CD4-positive, alpha-beta T cell (primary cell): ENCODE measurements at regions of chr11 and their contacts with region 1.

Region 1: DNA sequence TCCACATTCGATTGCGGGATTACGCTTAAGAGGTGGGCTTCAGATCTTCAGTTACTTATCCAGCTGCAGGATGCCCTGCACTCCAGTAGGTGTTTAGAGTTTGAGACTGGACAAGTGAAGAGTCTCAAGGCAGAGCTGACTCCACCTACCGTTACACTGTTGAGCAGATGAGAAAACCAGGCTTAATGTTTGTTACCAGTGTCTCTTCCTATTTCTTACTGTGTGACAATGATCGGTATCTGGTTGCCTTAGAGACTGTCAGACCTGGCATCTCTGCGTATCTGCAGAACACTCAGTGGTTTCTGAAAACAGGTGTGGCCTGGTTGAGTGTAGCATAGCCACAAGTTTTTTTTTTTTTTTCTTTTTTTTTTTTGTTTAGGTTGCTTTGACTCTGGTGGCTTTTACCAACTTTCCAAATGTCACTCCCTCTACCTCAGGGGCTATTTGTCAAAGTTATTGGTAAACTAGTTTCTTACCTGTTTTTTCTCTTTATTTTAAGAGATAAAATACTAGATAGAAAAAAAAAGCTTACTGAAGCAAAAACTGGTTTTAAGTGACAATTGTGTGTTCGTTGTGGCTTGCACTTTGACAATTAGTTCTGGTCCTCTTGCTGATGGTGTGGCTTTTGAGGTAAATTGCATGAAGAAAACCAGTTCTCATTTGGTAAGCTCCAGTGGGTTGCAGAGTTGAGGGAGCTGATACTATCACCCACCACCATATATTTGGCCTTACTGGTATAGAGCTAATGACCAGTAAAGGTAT is 284.8 kb downstream of the ETS1 start:
- DNase-seq: peak; percentile 49 to 97 (median 65)
- ATAC-seq: peak; percentile 85
- H3K4me3 ChIP-seq: peak overlapping the region; percentile 65
- H3K4me3 Mint-ChIP-seq: peak overlapping the region; percentile 94
- H3K27ac ChIP-seq: peak overlapping the region; percentile 90 to 94
- H3K27ac Mint-ChIP-seq: peak overlapping the region; percentile 100
- H3K4me1 ChIP-seq: peaks cover 82% of the 10 kb centered on the region
- H3K4me1 Mint-ChIP-seq: peaks cover 98% of the 10 kb centered on the region
- H3K27me3 ChIP-seq: no peaks in the 10 kb centered on the region
- H3K27me3 Mint-ChIP-seq: no peaks in the 10 kb centered on the region
- CTCF ChIP-seq: peak; percentile 46

Region 2: GRCh38 chr11:128279866-128280265 is 22.7 kb before region 1 on chr11:
- CTCF ChIA-PET with region 1: no interaction called
- POLR2A ChIA-PET with region 1: no interaction called
- intact Hi-C with region 1: no loop called
- DNase-seq: no peak
- ATAC-seq: no peak
- H3K4me3 ChIP-seq: no peak overlapping the region
- H3K4me3 Mint-ChIP-seq: no peak overlapping the region
- H3K27ac ChIP-seq: no peak overlapping the region
- H3K27ac Mint-ChIP-seq: no peak overlapping the region
- H3K4me1 ChIP-seq: peaks cover 4% of the 10 kb centered on the region
- H3K4me1 Mint-ChIP-seq: peaks cover 5% of the 10 kb centered on the region
- H3K27me3 ChIP-seq: no peaks in the 10 kb centered on the region
- H3K27me3 Mint-ChIP-seq: no peaks in the 10 kb centered on the region
- CTCF ChIP-seq: no peak

Region 3: DNA sequence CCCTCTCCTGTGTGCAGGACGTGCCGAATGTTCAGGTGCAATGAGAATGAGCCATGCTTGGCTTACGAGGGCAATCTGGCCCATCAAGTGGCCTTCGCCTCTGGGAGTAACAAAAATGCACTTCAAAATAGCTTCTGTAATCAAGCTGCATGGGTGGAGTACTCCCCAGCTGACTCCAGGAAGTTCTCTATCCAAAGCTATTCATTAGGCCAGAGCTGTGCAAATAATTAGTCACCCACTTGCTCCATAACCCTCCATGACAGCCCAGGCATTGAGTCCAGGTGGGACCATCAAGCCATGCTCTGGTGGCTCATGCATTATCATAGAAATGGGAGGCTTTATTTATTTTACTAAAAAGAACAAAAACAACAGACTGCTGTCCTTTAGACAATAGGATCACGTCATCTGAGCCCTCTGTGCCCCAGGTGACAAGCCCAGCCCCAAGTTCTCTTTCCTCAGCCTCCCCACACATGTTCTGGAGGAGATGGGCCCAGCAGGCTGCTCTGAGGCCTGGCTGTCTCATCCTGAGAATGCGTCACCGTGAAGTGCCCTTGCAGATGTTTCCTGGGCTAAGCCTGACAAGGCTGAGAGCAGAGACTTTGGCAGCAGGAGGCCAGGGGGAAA is 40.0 kb after region 1 on chr11:
- CTCF ChIA-PET with region 1: interaction called, 6 read pairs
- POLR2A ChIA-PET with region 1: interaction called, 16 read pairs
- intact Hi-C with region 1: loop called in 1 of 2 experiments (anchors 2 kb)
- DNase-seq: peak in 11 of 14 experiments; percentile 24 to 83 (median 67)
- ATAC-seq: peak; percentile 67
- H3K4me3 ChIP-seq: no peak overlapping the region
- H3K4me3 Mint-ChIP-seq: peak overlapping the region; percentile 73
- H3K27ac ChIP-seq: peak overlapping the region; percentile 79 to 88
- H3K27ac Mint-ChIP-seq: peak overlapping the region; percentile 99
- H3K4me1 ChIP-seq: peaks cover 65% of the 10 kb centered on the region
- H3K4me1 Mint-ChIP-seq: peaks cover 97% of the 10 kb centered on the region
- H3K27me3 ChIP-seq: no peaks in the 10 kb centered on the region
- H3K27me3 Mint-ChIP-seq: no peaks in the 10 kb centered on the region
- CTCF ChIP-seq: no peak

Region 4: GRCh38 chr11:128422576-128423370 is 120.2 kb after region 1 on chr11:
- CTCF ChIA-PET with region 1: interaction called, 10 read pairs
- POLR2A ChIA-PET with region 1: interaction called, 6 read pairs
- intact Hi-C with region 1: no loop called
- DNase-seq: peak; percentile 64 to 96 (median 82)
- ATAC-seq: peak; percentile 92
- H3K4me3 ChIP-seq: peak overlapping the region; percentile 13
- H3K4me3 Mint-ChIP-seq: peak overlapping the region; percentile 74
- H3K27ac ChIP-seq: peak overlapping the region in 1 of 2 donors; percentile 24
- H3K27ac Mint-ChIP-seq: peak overlapping the region; percentile 96
- H3K4me1 ChIP-seq: peaks cover 37% of the 10 kb centered on the region
- H3K4me1 Mint-ChIP-seq: peaks cover 75% of the 10 kb centered on the region
- H3K27me3 ChIP-seq: no peaks in the 10 kb centered on the region
- H3K27me3 Mint-ChIP-seq: no peaks in the 10 kb centered on the region
- CTCF ChIP-seq: no peak

Region 5: DNA sequence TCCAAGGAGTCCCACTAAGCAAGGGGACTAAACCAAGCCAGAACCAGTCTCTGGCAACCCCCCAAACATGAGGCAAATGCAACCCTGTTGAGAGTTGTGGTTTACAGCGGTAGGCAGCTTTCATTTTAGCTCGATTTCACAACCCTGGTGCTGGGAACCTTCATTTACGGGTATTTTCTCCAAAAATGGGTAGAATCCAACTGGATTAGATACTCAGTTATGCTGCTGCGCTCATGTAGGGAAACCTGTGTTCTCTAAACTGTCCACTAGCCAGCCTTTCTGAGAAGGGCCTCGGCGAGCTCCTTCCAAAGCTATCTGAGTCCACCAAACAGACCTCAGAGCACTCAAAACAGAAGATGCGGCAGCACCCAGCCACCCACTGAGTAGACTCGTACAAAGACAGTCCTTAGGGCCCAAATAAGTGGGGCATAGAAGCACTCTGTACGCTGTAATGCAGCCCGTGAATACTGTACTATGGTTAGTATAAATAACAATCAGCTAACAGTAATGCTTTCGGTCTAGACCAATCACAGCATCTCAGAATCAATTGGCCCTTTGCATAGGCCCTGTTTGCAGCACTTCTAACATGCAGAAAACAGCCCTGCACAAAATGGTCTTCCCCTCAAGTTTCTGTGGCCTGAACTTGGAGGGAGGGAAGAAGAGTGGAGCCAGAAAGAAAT is 180.0 kb after region 1 on chr11:
- CTCF ChIA-PET with region 1: interaction called, 7 read pairs
- POLR2A ChIA-PET with region 1: interaction called, 121 read pairs
- intact Hi-C with region 1: loop called in 1 of 2 experiments (anchors 2 kb)
- DNase-seq: peak in 6 of 14 experiments; percentile 51 to 87 (median 70)
- ATAC-seq: peak; percentile 58
- H3K4me3 ChIP-seq: peak overlapping the region; percentile 46
- H3K4me3 Mint-ChIP-seq: peak overlapping the region; percentile 76
- H3K27ac ChIP-seq: peak overlapping the region; percentile 92 to 94
- H3K27ac Mint-ChIP-seq: peak overlapping the region; percentile 99
- H3K4me1 ChIP-seq: peaks cover 95% of the 10 kb centered on the region
- H3K4me1 Mint-ChIP-seq: peaks cover 99% of the 10 kb centered on the region
- H3K27me3 ChIP-seq: no peaks in the 10 kb centered on the region
- H3K27me3 Mint-ChIP-seq: no peaks in the 10 kb centered on the region
- CTCF ChIP-seq: no peak

Region 6: GRCh38 chr11:128497061-128497775 is 194.6 kb after region 1 on chr11:
- CTCF ChIA-PET with region 1: no interaction called
- POLR2A ChIA-PET with region 1: interaction called, 15 read pairs
- intact Hi-C with region 1: no loop called
- DNase-seq: peak in 3 of 14 experiments; percentile 16 to 65 (median 59)
- ATAC-seq: no peak
- H3K4me3 ChIP-seq: peak overlapping the region; percentile 39
- H3K4me3 Mint-ChIP-seq: peak overlapping the region; percentile 65
- H3K27ac ChIP-seq: peak overlapping the region; percentile 39 to 93
- H3K27ac Mint-ChIP-seq: peak overlapping the region; percentile 99
- H3K4me1 ChIP-seq: peaks cover 75% of the 10 kb centered on the region
- H3K4me1 Mint-ChIP-seq: peaks cover 100% of the 10 kb centered on the region
- H3K27me3 ChIP-seq: no peaks in the 10 kb centered on the region
- H3K27me3 Mint-ChIP-seq: no peaks in the 10 kb centered on the region
- CTCF ChIP-seq: no peak

Region 7: DNA sequence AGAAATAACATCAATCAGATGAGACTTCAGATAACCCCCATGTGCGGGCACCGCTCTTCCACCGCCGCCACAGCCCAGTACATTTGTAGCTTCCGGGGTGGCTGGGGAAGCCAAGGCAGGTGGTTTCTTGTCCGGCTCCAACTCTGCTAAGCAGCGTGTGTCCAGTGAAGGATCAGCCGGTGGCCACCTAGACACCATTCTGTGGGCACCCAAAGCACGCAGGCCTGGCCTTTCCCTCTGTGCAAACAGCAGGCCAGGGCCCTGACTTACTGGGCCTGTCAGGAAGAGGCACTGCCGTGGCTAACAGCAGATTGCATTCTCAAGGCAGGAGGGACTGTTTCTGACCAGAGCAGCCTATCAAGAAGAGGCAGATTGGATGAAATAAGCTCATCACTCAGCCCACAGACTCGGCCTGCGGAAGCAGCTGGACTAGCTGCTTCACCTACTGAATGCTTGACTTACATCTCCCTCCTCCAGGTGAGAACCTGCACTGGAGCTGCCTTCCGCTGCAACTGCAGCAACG is 209.9 kb after region 1 on chr11:
- CTCF ChIA-PET with region 1: no interaction called
- POLR2A ChIA-PET with region 1: interaction called, 18 read pairs
- intact Hi-C with region 1: no loop called
- DNase-seq: peak in 5 of 14 experiments; percentile 42 to 61 (median 59)
- ATAC-seq: peak; percentile 7
- H3K4me3 ChIP-seq: peak overlapping the region; percentile 89
- H3K4me3 Mint-ChIP-seq: peak overlapping the region; percentile 93
- H3K27ac ChIP-seq: peak overlapping the region; percentile 43 to 93
- H3K27ac Mint-ChIP-seq: peak overlapping the region; percentile 99
- H3K4me1 ChIP-seq: peaks cover 55% of the 10 kb centered on the region
- H3K4me1 Mint-ChIP-seq: peaks cover 92% of the 10 kb centered on the region
- H3K27me3 ChIP-seq: no peaks in the 10 kb centered on the region
- H3K27me3 Mint-ChIP-seq: no peaks in the 10 kb centered on the region
- CTCF ChIP-seq: no peak